ENCODE measurements at regions of chr2 and their contacts with region 1.

Region 1: GRCh38 chr2:38076606-38077430 is 867 bp upstream of the CYP1B1 start:
- DNase-seq: peak; percentile 73

Region 2: DNA sequence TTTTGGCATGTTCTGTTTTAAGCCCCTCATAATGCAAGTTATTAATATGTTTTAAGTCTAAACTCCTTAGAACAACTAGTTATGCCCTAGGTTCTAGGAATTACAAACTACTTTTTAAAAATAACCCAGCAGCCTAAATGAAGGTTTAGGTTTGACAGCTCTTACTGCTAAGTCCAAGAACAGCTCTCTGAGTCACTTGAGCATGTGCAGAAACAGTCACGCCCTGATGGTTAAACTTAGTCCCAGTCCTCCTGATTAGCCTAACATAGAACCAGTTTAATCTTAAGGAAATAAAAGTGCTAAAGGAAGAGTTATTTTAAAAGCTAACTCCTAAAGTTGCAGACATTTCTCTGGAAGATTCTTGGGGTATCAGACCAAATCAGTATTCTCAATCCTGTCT is 79.2 kb before region 1 on chr2:
- CTCF ChIA-PET with region 1: no interaction called
- POLR2A ChIA-PET with region 1: no interaction called
- DNase-seq: no peak

Region 3: GRCh38 chr2:38095996-38096861 is 19.4 kb after region 1 on chr2:
- CTCF ChIA-PET with region 1: interaction called, 7 read pairs
- POLR2A ChIA-PET with region 1: interaction called, 18 read pairs
- DNase-seq: peak; percentile 66

Region 4: DNA sequence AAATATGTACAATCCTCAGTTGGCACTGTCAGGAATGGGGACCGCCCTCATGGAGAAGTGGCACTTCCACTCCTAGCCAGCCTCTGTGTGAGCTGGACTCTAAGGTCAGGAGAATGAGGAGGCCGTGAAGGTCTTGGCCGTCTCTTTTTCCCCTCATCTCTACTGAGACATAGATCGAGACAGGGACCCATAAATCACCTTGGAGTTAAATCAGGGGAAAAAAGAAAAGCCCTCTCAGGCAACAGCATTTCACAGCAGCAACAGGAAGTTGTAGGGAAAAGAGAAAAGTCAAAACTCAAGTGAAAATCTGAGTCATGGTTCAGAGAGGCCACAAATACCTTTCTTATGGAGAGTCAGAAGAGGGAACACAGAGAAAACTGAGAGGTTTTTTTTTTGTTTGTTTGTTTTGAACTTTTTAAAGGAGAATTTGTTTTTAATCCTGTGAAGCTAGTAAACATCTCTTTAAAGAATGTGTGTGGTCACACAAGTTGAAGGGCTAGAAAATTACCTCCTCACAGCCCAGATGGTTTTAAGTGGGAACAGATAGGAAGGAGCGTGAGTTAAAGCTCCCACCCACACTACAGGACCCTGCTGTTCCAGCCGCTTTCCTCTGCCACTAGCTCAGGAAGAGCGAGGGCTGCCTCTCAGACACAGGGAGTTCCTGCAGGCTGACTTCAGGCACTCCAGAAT is 29.7 kb after region 1 on chr2:
- CTCF ChIA-PET with region 1: interaction called, 3 read pairs
- POLR2A ChIA-PET with region 1: interaction called, 10 read pairs
- DNase-seq: no peak

Region 5: DNA sequence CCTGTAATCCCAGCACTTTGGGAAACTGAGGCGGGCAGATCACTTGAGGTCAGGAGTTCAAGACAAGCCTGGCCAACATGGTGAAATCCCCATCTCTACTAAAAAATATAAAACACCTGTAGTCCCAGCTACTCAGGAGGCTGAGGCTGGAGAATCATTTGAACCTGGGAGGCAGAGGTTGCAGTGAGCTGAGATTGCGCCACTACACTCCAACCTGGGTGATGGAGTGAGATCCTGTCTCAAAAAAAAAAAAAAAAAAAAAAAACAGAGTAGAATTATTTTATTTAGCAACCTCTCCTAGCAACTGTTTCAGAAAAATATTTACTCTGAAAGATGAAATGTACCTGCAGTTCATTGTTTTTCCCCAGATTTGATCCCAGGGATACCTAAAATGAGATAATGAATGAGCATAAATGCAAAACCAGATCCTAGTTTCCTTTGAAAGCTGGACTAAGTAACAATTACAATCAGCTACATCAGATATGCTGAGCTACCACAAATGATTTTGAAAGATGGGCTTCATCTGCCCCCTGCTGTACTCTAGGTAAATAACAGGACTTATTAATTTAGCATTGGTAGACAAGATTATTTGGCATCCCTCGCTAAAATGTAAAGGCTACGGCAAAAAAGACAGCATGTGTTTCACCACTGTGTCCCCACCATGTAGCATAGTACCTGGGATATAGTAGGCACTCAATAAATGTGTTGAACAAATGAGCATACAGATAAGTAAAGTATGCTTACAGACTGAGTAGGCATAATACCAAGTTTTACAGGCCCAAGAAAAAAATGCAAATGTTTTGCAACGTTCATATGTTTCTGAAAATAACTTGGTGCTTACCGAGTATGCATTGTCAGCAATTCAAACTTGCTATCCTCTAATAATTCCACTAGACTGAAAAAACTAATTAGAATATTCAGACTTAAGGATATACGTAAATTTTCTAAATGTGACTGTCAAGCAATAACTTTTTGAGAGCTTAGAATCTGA is 197.8 kb after region 1 on chr2:
- CTCF ChIA-PET with region 1: interaction called, 12 read pairs
- POLR2A ChIA-PET with region 1: interaction called, 4 read pairs
- DNase-seq: peak; percentile 56

Region 6: GRCh38 chr2:38466876-38467767 is 390.3 kb after region 1 on chr2:
- CTCF ChIA-PET with region 1: no interaction called
- POLR2A ChIA-PET with region 1: no interaction called
- DNase-seq: no peak